ENCODE measurements at regions of chr2 and their contacts with region 1.

Region 1: DNA sequence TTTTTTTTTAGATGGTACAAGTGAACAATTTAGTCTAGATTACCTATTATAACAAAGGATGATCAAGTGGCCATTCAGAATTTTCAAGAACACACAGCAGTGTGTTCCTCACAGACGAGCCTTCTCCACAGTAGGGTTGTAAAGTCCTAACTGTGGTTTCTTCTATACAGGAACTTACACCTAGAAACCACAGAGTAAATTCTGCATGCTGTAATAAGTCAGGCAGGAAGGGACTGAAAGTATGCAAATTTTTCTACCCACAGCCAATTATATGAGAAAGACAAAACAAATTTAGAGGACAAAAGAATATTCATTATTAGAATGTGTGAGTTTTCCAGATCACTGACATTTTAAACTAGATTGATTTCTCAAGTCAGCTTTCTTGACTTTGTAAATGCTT is 99.5 kb downstream of the RBMS1 start:
- DNase-seq: no peak
- H3K27ac ChIP-seq: no peak overlapping the region
- CTCF ChIP-seq: no peak

Region 2: DNA sequence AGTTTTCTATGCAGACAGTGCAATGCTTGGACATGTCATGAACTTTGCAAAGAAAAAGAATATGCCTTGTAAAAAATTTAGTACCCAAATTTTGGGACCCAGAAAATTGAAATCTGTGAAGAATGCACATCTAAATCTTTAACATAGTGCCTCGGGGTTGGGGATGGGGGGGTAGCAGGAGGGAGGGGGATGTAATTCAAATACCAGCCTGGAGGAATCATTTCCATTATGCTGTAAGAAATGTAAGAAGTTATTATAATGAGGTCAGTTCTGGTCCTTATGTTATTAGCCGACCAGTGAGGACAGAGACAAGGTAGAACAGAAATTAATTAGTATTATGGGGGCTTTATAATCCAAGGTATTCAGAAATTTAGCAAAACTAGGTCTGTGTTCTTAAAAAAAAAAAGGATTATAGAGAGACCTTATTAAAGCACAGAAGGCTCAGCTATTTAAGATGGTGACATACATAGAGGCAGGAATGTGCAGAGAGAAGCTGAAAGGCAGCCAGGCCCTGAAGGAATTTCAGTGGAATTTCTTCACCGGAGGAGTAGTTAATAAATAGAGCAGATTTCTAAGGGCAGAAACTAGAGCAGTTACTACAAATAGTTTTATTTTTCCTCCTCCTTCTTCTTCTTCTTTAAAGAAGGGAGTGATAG is 188.5 kb after region 1 on chr2:
- CTCF ChIA-PET with region 1: no interaction called
- POLR2A ChIA-PET with region 1: no interaction called
- DNase-seq: no peak
- H3K27ac ChIP-seq: no peak overlapping the region
- CTCF ChIP-seq: no peak

Region 3: GRCh38 chr2:160928854-160929620 is 534.9 kb after region 1 on chr2:
- CTCF ChIA-PET with region 1: interaction called, 10 read pairs
- POLR2A ChIA-PET with region 1: no interaction called
- DNase-seq: no peak
- H3K27ac ChIP-seq: no peak overlapping the region
- CTCF ChIP-seq: no peak

Measured in RWPE1 (cell line).